GM12878 (cell line): ENCODE measurements at regions of chr5 and their contacts with region 1.

Region 1: GRCh38 chr5:5421961-5422818 is at the start of gene ICE1:
- DNase-seq: peak; percentile 91
- ATAC-seq: peak; percentile 90
- H3K4me3 ChIP-seq: peak within 1 kb of the TSS; percentile 91
- H3K27ac ChIP-seq: peak within 1 kb of the TSS; percentile 94
- H3K4me1 ChIP-seq: peaks cover 27% of the 10 kb centered on the region
- H3K27me3 ChIP-seq: no peaks in the 10 kb centered on the region
- CTCF ChIP-seq: no peak
- EP300 ChIP-seq: no peak
- POLR2A ChIP-seq: peak; percentile 94
- RAD21 ChIP-seq: no peak
- polyA plus RNA-seq, gene ICE1: 3.8 to 5.5 TPM

Region 2: GRCh38 chr5:4868109-4868735 is 554.0 kb before region 1 on chr5:
- CTCF ChIA-PET with region 1: interaction called, 11 read pairs
- POLR2A ChIA-PET with region 1: no interaction called
- RAD21 ChIA-PET with region 1: interaction called, 9 read pairs
- SMC1A ChIA-PET with region 1: interaction called, 3 read pairs
- in situ Hi-C with region 1: no loop called
- intact Hi-C with region 1: loop called (anchors 1 kb)
- DNase-seq: no peak
- ATAC-seq: peak; percentile 69
- H3K4me3 ChIP-seq: no peak overlapping the region
- H3K27ac ChIP-seq: no peak overlapping the region
- H3K4me1 ChIP-seq: no peaks in the 10 kb centered on the region
- H3K27me3 ChIP-seq: no peaks in the 10 kb centered on the region
- CTCF ChIP-seq: peak; percentile 58 to 72 (median 70); a peak in 5 of 6 replicates
- EP300 ChIP-seq: no peak
- POLR2A ChIP-seq: no peak
- RAD21 ChIP-seq: peak; percentile 79

Region 3: GRCh38 chr5:5141625-5142532 is 280.3 kb before region 1 on chr5:
- CTCF ChIA-PET with region 1: interaction called, 28 read pairs
- POLR2A ChIA-PET with region 1: no interaction called
- RAD21 ChIA-PET with region 1: interaction called, 16 read pairs
- SMC1A ChIA-PET with region 1: interaction called, 17 read pairs
- in situ Hi-C with region 1: loop called (anchors 5 kb)
- intact Hi-C with region 1: loop called (anchors 1 kb)
- DNase-seq: no peak
- ATAC-seq: peak; percentile 71
- H3K4me3 ChIP-seq: no peak overlapping the region
- H3K27ac ChIP-seq: no peak overlapping the region
- H3K4me1 ChIP-seq: no peaks in the 10 kb centered on the region
- H3K27me3 ChIP-seq: peaks cover 2 to 4% of the 10 kb centered on the region in 2 experiments; a peak in 2 of 4 replicates
- CTCF ChIP-seq: peak; percentile 42 to 54 (median 53); a peak in 5 of 6 replicates
- EP300 ChIP-seq: no peak
- POLR2A ChIP-seq: no peak
- RAD21 ChIP-seq: peak; percentile 75